ENCODE measurements at regions of chr1 and their contacts with region 1.

Region 1: GRCh38 chr1:203216274-203217138 is 13.0 kb downstream of the CHIT1 start:
- DNase-seq: peak; percentile 60 to 65
- ATAC-seq: peak; percentile 75 to 92
- H3K4me3 ChIP-seq: no peak overlapping the region
- H3K27ac ChIP-seq: no peak overlapping the region
- H3K4me1 ChIP-seq: no peaks in the 10 kb centered on the region
- CTCF ChIP-seq: peak; percentile 90
- EP300 ChIP-seq: no peak
- POLR2A ChIP-seq: no peak
- RAD21 ChIP-seq: peak; percentile 84 to 92

Region 2: DNA sequence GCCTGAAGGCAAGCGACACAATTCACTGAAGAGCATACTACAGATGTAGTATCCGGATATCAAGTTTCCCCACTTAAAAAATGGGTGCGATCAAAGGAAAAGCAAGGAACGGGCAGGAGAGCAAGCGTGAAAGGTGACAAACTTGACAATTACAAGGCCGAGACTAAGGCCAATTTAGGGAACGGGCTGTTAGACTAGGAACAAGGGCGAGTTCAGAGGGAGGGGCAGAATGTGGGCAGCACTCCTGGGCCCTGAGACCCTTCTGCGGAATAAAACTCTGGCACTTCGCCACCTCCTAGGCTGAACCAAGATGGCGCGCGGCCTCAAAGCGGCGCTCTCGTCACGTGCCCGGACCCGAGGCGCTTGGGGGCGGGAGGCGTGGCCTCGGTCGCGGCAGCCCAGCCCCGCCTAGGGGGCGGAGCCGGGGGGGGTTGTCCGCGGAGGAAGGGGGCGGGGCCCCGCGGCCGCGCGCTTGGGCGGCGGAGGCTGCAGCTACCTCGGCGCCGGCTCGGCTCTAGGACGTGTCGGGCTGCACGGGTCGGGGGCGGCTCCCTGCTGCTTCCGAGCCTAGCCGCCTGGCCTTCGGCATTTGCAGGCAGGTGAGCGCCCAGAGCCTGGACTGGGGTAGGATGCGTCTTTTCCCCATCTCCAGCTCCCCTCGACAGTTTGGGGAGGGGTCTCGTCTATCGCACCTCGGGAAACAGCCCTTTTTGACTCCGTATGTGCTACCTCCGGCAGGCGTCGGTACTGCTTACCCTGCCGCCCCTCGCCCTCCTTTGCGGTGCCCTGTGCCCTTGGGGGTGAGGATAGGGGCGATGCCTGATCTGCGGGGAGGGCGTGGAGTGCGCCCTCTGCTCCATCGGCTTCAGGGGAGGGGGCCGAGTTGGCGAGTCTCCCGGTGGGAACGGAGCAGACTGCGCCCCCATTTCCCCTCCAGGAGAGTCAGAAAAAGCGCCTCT is 190.2 kb before region 1 on chr1 and contains the start of gene PPFIA4:
- CTCF ChIA-PET with region 1: interaction called, 452 read pairs
- POLR2A ChIA-PET with region 1: no interaction called
- DNase-seq: peak; percentile 72 to 87
- ATAC-seq: peak; percentile 68 to 90
- H3K4me3 ChIP-seq: peak within 1 kb of the TSS; percentile 58
- H3K27ac ChIP-seq: peak within 1 kb of the TSS; percentile 59 to 84; a peak in 5 of 6 replicates
- H3K4me1 ChIP-seq: no peaks in the 10 kb centered on the region
- CTCF ChIP-seq: no peak
- EP300 ChIP-seq: no peak
- POLR2A ChIP-seq: peak; percentile 37
- RAD21 ChIP-seq: peak; percentile 12 to 24; a peak in 2 of 5 replicates
- polyA plus RNA-seq, gene PPFIA4: 0.47 and 1.0 TPM in 2 replicates

Region 3: DNA sequence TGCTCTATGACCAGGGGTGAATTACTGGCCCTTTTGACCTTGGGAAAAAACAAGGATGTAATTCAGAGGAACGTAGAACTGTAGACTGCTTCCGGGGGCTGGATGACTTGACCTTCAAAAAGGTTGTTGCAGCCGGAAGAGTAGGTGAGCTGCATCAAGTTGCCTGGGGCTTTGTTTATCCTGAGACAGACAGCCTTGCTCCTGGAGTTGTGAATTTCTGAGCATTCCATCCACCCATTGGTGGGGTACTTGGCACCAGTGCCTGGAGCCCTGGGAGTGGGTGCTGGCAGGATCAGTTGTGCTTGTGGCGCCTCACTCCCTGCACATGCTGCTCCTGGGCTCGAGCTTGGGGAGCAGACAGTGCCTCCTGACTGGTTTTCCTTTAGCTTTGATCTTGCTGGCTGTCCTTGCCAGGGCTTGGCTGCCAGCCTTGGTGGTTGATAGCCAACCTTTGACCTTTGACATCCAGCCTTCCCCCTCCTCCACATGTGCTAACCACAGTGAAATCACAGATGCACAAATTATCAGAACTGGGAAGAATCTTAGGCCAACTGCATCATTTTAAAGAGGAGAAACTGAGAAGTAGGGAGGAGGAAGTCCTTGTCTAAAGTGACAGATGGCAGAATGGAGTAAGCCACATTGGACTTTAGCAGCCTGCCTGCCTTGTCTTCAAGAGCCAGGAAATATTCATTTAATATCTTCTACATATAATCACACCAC is 114.4 kb before region 1 on chr1:
- CTCF ChIA-PET with region 1: interaction called, 14 read pairs
- POLR2A ChIA-PET with region 1: no interaction called
- DNase-seq: no peak
- ATAC-seq: no peak
- H3K4me3 ChIP-seq: no peak overlapping the region
- H3K27ac ChIP-seq: no peak overlapping the region
- H3K4me1 ChIP-seq: no peaks in the 10 kb centered on the region
- CTCF ChIP-seq: no peak
- EP300 ChIP-seq: no peak
- POLR2A ChIP-seq: no peak
- RAD21 ChIP-seq: no peak

Region 4: GRCh38 chr1:203133970-203134725 is 82.4 kb before region 1 on chr1:
- CTCF ChIA-PET with region 1: interaction called, 39 read pairs
- POLR2A ChIA-PET with region 1: no interaction called
- DNase-seq: no peak
- ATAC-seq: no peak
- H3K4me3 ChIP-seq: no peak overlapping the region
- H3K27ac ChIP-seq: no peak overlapping the region; a peak in 1 of 6 replicates
- H3K4me1 ChIP-seq: peaks cover 20% of the 10 kb centered on the region; the same call in 2 of the 3 replicates
- CTCF ChIP-seq: no peak
- EP300 ChIP-seq: no peak
- POLR2A ChIP-seq: no peak
- RAD21 ChIP-seq: no peak

Region 5: DNA sequence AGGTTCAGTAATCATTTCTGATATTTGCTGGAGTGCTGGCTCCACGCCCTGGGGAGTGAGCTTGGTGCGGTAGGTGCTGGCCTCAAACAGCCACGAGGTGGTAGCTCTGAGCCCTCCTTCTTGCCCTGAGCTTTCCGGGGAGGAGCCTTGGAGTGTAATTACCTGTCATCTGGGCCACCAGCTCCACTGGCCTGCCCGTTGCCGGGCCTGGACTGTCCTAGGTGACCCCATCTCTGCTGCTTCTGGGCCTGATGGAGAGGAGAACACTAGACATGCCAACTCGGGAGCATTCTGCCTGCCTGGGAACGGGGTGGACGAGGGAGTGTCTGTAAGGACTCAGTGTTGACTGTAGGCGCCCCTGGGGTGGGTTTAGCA is 50.0 kb before region 1 on chr1:
- CTCF ChIA-PET with region 1: interaction called, 83 read pairs
- POLR2A ChIA-PET with region 1: no interaction called
- DNase-seq: peak in 1 of 2 experiments; percentile 15
- ATAC-seq: peak; percentile 38 to 84; a peak in 4 of 6 replicates
- H3K4me3 ChIP-seq: no peak overlapping the region
- H3K27ac ChIP-seq: no peak overlapping the region
- H3K4me1 ChIP-seq: no peaks in the 10 kb centered on the region
- CTCF ChIP-seq: peak; percentile 26; the same call in 1 of the 3 replicates
- EP300 ChIP-seq: no peak
- POLR2A ChIP-seq: no peak
- RAD21 ChIP-seq: peak in 1 of 2 experiments; percentile 16; a peak in 1 of 5 replicates

Region 6: DNA sequence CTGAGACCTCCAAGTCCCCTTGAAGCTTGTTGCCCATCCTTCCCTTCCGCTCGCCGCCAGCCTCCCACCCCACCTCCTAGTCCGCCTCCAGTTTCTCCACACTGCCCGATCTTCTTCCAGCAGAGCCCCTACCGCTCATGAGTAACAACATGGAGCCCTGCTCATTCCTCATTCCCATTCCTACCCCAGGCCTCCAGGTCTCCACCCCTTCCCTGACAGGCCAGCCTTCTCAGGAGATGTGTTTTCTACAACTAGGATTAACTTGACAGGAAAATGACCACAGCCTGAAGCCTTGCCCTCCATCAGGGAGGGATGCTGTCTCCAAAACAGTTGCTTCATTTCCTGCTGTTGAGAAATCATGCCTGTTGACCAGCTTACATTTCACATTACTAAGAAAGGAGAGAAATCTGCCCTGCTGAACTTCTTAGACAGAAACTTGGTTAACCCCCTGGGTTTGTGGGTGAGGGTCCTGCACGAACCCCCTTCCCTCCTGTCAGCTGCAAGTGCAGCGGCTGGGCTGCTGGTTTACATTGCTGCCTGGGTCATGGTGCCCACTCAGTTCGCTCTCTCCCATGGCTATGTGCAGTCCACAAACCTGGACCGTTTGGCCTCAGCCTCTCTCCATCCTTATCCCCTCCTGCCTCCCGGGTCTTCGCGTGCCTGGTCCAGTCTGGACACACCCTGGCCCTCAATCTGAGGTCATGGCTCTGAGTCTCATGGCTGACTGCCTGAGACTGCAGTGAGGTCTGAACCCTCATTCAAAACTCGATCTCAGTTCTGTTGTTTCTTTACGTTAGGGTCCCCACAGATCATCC is 13.9 kb before region 1 on chr1:
- CTCF ChIA-PET with region 1: interaction called, 84 read pairs
- POLR2A ChIA-PET with region 1: no interaction called
- DNase-seq: no peak
- ATAC-seq: no peak
- H3K4me3 ChIP-seq: no peak overlapping the region
- H3K27ac ChIP-seq: no peak overlapping the region
- H3K4me1 ChIP-seq: peaks cover 5% of the 10 kb centered on the region; the same call in 1 of the 3 replicates
- CTCF ChIP-seq: no peak
- EP300 ChIP-seq: no peak
- POLR2A ChIP-seq: no peak
- RAD21 ChIP-seq: no peak

Region 7: GRCh38 chr1:203273206-203273868 is 56.8 kb after region 1 on chr1:
- CTCF ChIA-PET with region 1: interaction called, 96 read pairs
- POLR2A ChIA-PET with region 1: no interaction called
- DNase-seq: peak; percentile 73 to 82
- ATAC-seq: peak; percentile 73 to 88
- H3K4me3 ChIP-seq: no peak overlapping the region
- H3K27ac ChIP-seq: peak overlapping the region; percentile 29 to 67; a peak in 4 of 6 replicates
- H3K4me1 ChIP-seq: peaks cover 9% of the 10 kb centered on the region
- CTCF ChIP-seq: peak; percentile 97
- EP300 ChIP-seq: no peak
- POLR2A ChIP-seq: no peak
- RAD21 ChIP-seq: peak; percentile 93 to 95

Region 8: DNA sequence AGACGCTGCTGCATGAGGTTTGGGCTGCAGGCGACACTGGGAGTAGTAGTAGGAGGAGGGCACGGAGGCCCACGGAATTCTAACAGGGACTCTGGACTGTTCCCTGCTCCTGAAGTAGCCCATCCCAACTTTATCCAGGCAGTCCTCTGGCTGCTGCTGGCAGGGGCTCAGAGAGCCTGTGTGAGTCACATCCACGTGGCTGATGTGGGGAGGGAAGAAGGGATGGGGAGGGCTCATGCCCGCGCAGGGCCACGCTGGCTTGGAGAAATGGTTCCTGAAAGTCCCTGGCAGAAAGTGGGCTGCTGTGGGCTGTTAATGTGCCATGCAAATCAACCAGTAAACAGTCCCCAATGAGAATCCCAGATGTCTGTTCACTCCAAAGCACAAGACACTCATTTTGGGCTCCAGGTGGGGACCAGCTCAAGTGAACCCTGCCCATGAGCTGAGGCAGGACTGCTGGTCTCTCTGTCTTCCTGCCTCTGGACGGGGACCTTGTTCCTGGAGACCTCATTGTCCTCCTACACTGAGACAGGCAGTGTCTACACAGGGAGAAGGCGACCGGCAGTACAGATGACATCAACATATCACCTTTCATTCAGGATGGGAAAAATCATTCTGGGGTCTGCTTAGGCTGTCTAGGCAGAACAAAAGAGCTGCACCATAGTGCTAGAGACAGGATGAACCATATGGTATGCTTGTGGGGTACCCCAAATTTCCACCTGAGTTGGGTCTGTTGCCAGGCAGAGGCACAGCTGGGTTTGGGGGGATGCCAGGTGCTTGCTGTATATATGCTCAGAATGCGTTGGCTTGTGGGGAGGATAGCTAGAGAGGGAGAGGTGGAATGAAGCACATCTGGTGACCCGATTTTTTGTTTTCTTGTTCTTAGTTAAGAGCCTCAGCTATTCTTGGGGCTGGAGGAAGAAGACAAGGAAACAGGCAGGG is 192.3 kb after region 1 on chr1:
- CTCF ChIA-PET with region 1: no interaction called
- POLR2A ChIA-PET with region 1: no interaction called
- DNase-seq: peak in 1 of 2 experiments; percentile 7
- ATAC-seq: peak; percentile 62 to 67; a peak in 4 of 6 replicates
- H3K4me3 ChIP-seq: no peak overlapping the region
- H3K27ac ChIP-seq: peak overlapping the region; percentile 4 to 13; a peak in 1 of 6 replicates
- H3K4me1 ChIP-seq: peaks cover 6% of the 10 kb centered on the region; the same call in 2 of the 3 replicates
- CTCF ChIP-seq: no peak
- EP300 ChIP-seq: no peak
- POLR2A ChIP-seq: no peak
- RAD21 ChIP-seq: no peak